SK-N-SH (cell line): ENCODE measurements at regions of chr20 and their contacts with region 1.

Region 1: DNA sequence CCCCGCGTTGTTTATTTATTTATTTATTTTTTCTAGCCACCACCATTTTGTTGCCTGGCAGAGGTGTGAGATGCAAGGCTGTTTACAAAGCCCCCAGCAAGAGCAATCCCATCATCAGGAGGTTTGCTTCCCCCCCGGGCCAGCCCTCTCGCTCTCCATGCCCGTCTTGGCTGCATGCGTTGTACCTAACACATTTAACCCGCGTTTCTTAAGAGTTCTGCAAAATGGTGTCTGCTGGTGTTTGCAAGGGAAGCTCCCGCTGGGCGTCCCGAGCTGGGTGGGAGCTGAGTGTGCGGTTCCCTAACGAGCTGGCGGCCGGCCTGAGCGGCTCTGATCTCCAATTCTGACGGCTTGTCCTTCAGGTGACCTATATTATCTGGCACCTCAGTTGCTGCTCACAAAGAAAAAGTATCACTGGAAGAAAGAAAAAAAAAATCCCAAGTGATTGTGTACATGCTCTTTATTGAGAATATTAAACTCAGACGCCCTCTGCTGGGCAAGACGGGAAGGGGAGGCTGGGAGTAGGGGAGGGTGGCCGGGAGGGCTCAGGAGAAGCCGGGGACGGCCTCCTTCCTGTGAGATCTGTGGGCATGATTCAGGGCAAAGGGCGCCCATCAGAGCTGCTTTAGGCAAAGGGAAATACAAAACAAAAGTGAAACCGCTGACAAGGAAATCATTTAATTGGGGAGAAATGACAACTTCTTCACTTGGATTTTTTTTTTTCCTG is 154.8 kb downstream of the BCAS1 start:
- DNase-seq: peak; percentile 86
- H3K4me3 ChIP-seq: peak overlapping the region; percentile 58 to 75
- H3K27ac ChIP-seq: peak overlapping the region; percentile 96 to 99
- H3K4me1 ChIP-seq: peaks cover 37 to 41% of the 10 kb centered on the region in 2 experiments
- H3K27me3 ChIP-seq: no peaks in the 10 kb centered on the region
- CTCF ChIP-seq: peak; percentile 94
- EP300 ChIP-seq: peak; percentile 7 to 36; a peak in 1 of 4 replicates
- RAD21 ChIP-seq: peak; percentile 85

Region 2: DNA sequence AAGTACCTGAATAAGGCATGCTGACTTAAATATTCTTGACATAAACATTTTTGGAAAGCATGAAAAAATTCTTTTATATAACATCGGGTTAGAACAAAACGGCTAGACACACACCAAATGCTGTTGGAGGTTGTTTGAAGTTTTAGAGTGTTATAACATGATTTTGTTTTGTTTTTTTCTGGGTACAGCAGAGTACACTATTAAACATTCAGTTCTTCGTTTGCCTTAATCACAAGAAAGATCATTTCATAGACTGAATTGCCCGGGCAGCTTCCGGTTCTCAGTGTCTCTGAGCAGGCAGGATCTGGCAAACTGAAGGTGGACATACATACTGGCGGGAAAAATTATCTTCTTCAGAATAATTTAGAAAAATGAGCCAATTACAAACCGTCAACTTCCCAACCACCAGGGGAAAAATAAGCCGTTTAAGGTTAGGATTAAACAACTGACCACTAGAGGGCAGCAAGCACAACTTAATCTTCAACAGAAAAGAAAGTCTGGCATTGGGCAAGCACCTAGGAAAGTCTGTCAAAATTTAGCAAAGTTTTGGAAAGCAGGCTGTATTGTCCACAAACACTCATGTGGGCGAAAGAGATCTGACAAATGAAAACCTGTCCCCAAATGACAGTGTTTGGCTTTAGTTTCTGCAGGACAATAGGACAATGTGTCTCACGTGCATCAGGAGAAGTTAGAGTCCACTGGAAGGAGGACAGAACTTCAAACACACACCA is 337.0 kb before region 1 on chr20:
- CTCF ChIA-PET with region 1: interaction called, 34 read pairs
- POLR2A ChIA-PET with region 1: interaction called, 3 read pairs
- DNase-seq: peak; percentile 77
- H3K4me3 ChIP-seq: peak overlapping the region in 1 of 2 experiments; percentile 52; a peak in 2 of 4 replicates
- H3K27ac ChIP-seq: peak overlapping the region; percentile 66 to 95
- H3K4me1 ChIP-seq: peaks cover 12 to 48% of the 10 kb centered on the region in 2 experiments
- H3K27me3 ChIP-seq: no peaks in the 10 kb centered on the region
- CTCF ChIP-seq: peak; percentile 90
- EP300 ChIP-seq: no peak
- RAD21 ChIP-seq: peak; percentile 90

Region 3: GRCh38 chr20:53613748-53614147 is 301.9 kb before region 1 on chr20:
- CTCF ChIA-PET with region 1: interaction called, 10 read pairs
- POLR2A ChIA-PET with region 1: interaction called, 5 read pairs
- DNase-seq: no peak
- H3K4me3 ChIP-seq: no peak overlapping the region
- H3K27ac ChIP-seq: peak overlapping the region; percentile 30 to 97; a peak in 3 of 4 replicates
- H3K4me1 ChIP-seq: peaks cover 7 to 22% of the 10 kb centered on the region in 2 experiments
- H3K27me3 ChIP-seq: no peaks in the 10 kb centered on the region
- CTCF ChIP-seq: no peak
- EP300 ChIP-seq: no peak
- RAD21 ChIP-seq: no peak

Region 4: DNA sequence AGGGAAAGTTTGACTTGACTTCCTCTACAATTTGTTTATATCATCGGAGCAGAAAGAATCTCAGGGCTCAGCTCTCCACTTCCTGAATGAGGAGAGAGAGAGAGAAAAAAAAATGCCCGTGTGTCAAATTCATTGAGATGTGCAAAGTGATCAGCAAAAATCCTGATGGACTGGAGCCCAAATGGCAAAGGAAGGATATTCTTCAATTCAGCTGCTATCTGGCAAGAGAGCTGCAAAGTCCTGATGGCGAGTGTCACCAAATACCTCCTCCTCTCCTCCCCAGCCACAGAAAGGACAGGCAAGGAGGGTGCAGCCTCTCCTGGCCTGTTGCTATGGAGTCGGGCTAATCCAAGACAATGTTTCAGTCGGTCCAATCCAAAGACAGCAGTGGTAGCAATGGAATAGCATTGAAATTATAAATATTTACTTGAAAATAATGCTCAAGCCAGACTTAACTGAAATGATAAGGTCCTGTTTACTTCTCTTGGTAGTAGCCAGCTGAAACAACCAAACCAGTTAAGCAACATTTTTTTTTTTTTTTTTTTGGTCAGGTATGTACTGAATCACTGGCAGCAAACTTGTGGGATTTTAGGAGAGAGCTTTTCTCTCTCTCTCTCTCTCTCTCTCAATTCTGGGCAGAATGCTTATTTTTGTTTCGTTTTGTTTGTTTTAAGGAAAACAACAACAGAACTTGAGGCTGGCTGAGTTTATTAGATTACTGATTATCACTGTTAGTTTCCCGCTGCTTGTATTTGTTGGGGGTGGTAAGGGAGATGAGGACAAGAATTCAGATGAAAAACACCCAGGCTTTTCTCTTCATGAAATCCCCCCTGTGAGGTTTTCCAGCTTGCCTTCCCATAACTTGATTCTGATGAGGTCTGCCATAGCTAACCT is 49.5 kb before region 1 on chr20:
- CTCF ChIA-PET with region 1: interaction called, 17 read pairs
- POLR2A ChIA-PET with region 1: interaction called, 3 read pairs
- DNase-seq: peak; percentile 19
- H3K4me3 ChIP-seq: no peak overlapping the region
- H3K27ac ChIP-seq: peak overlapping the region; percentile 90
- H3K4me1 ChIP-seq: peaks cover 16 to 43% of the 10 kb centered on the region in 2 experiments
- H3K27me3 ChIP-seq: no peaks in the 10 kb centered on the region
- CTCF ChIP-seq: no peak
- EP300 ChIP-seq: no peak
- RAD21 ChIP-seq: no peak

Region 5: DNA sequence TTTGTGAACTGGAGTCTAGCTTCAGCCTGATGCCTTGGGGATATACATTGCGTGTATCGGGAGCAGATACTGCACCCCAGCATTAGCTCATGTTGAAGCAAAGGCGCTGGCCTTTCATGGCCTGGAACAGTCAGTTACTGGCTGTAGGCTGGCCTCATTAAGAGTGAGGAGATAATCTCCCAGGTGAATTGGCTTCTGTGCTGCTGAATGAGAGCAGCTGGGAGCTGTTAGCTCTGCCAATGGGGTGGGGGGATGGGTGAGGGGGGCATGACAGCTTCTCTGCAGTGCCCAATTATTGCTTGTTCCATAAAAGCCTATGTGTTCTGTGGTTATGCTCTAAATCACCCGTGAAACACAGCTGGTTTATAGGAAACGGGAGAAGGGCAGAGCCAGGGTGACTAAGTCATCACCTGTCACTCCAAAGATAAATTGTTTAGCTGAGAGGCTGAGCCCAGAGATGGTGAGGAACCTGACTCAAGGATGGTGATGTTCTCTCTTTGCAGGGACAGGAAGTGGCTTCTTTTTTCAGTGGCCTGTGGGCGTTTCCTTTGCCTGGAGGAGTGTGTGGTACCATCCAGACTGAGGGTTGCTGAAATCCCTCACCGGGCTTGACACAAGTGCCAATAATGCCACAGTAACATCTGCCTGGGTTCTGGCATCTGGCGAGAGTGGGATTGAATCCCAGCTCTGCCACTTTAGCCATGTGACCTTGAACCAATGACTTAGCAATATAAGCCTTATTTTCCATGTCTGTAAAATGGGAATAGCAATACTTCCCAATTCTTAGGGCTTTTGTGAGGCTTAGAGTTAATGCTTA is 16.1 kb before region 1 on chr20:
- CTCF ChIA-PET with region 1: interaction called, 20 read pairs
- POLR2A ChIA-PET with region 1: no interaction called
- DNase-seq: peak; percentile 38
- H3K4me3 ChIP-seq: no peak overlapping the region
- H3K27ac ChIP-seq: peak overlapping the region; percentile 44 to 99
- H3K4me1 ChIP-seq: peaks cover 31 to 36% of the 10 kb centered on the region in 2 experiments
- H3K27me3 ChIP-seq: no peaks in the 10 kb centered on the region
- CTCF ChIP-seq: no peak
- EP300 ChIP-seq: peak; percentile 59 to 93
- RAD21 ChIP-seq: no peak; the same call in 1 of the 2 replicates

Region 6: GRCh38 chr20:53939572-53940359 is 24.2 kb after region 1 on chr20:
- CTCF ChIA-PET with region 1: interaction called, 17 read pairs
- POLR2A ChIA-PET with region 1: no interaction called
- DNase-seq: peak; percentile 50
- H3K4me3 ChIP-seq: no peak overlapping the region
- H3K27ac ChIP-seq: peak overlapping the region; percentile 53 to 93
- H3K4me1 ChIP-seq: peaks cover 13 to 39% of the 10 kb centered on the region in 2 experiments
- H3K27me3 ChIP-seq: no peaks in the 10 kb centered on the region
- CTCF ChIP-seq: peak; percentile 88
- EP300 ChIP-seq: peak in 1 of 2 experiments; percentile 12; a peak in 1 of 4 replicates
- RAD21 ChIP-seq: peak; percentile 84

Region 7: GRCh38 chr20:53967527-53967926 is 51.9 kb after region 1 on chr20:
- CTCF ChIA-PET with region 1: no interaction called
- POLR2A ChIA-PET with region 1: no interaction called
- DNase-seq: no peak
- H3K4me3 ChIP-seq: no peak overlapping the region
- H3K27ac ChIP-seq: no peak overlapping the region
- H3K4me1 ChIP-seq: no peaks in the 10 kb centered on the region
- H3K27me3 ChIP-seq: peaks cover 11% of the 10 kb centered on the region; the same call in 1 of the 2 replicates
- CTCF ChIP-seq: no peak
- EP300 ChIP-seq: no peak
- RAD21 ChIP-seq: no peak

Region 8: DNA sequence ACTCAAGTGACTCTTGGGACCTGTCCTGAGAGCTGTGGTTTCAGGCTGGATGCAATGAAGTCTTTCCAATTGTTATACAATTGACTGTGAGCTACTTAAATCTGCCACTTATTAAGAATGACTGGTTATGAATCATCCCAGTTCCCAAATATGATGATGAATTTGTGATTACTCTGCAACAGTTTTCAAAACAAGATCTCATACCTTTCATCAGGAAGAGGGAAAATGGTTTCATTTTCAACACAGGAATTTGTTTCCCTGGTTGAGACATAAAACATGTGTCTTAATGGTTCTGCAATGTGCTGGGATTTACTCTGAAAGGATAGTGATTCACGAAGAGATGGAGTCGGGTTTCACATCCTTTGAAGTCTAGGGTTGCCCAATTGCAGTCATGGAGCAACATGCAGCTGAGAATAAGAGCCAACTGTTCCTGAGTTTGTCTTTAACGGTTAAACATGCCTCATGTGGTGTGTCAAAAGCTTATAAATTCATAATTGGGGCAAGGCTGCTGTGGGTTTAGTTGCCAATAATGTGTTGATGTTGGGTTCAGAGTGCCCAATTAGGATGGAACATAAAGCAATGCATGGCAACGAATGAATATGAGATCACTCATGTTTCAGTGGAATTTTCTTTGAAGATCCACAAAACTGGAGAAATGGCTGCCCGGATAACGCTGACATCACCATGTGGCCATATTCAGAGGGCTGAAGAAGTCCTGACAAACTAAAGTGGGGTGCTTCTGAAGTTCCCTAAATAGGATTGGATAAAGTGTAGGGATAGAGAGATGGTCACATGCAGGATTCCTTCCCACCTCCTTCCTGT is 217.2 kb after region 1 on chr20:
- CTCF ChIA-PET with region 1: no interaction called
- POLR2A ChIA-PET with region 1: no interaction called
- DNase-seq: no peak
- H3K4me3 ChIP-seq: peak overlapping the region; percentile 17 to 19; a peak in 3 of 4 replicates
- H3K27ac ChIP-seq: peak overlapping the region; percentile 53 to 94; a peak in 3 of 4 replicates
- H3K4me1 ChIP-seq: peaks cover 0 to 22% of the 10 kb centered on the region in 2 experiments
- H3K27me3 ChIP-seq: no peaks in the 10 kb centered on the region
- CTCF ChIP-seq: no peak
- EP300 ChIP-seq: peak; percentile 41 to 93; a peak in 3 of 4 replicates
- RAD21 ChIP-seq: no peak